Heart left ventricle (tissue), 16 donors: ENCODE measurements at regions of chr17 and their contacts with region 1.

Region 1: DNA sequence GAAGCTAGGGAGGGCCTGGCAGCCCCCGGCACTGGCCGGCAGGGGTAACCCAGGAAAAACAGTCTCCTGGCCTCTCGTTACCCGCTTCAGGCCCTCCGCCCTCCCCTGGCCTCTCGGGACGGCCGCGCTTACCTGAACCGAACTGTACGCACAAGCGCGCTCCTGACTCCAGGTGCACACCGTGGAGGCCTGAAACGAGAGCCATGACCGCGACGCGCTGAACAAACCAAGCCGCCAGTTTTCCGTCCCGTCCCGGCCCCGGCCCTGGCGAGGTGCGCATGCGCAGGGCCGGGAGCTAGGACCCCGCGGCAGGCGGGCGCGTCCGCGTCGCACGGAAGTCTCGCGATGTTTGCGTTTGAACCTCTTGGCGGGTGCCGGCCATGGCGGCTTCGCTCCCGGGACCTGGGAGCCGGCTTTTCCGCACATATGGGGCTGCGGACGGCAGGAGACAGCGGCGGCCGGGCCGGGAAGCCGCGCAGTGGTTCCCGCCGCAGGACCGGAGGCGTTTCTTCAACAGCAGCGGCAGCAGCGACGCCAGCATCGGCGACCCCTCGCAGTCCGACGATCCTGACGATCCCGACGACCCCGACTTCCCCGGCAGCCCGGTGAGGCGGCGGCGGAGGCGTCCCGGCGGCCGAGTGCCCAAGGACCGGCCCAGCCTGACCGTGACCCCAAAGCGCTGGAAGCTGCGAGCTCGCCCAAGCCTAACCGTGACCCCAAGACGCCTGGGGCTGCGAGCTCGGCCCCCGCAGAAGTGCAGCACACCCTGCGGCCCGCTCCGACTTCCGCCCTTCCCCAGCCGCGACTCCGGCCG is at the start of gene HASPIN:
- DNase-seq: peak; percentile 91 to 98 (median 93)
- ATAC-seq: peak; percentile 83 to 96 (median 96)
- H3K4me3 ChIP-seq: peak within 1 kb of the TSS; percentile 65 to 94 (median 78)
- H3K27ac ChIP-seq: peak within 1 kb of the TSS; percentile 52 to 91 (median 88)
- H3K4me1 ChIP-seq: peaks cover 6 to 47% (median 19%) of the 10 kb centered on the region in 12 donors
- H3K27me3 ChIP-seq: no peaks in the 10 kb centered on the region
- CTCF ChIP-seq: peak in 4 of 12 donors; percentile 25 to 41 (median 28)
- POLR2A ChIP-seq: peak in 1 of 2 donors; percentile 67
- total RNA-seq, gene HASPIN: 0.15 to 2.1 (median 0.32) TPM

Region 2: GRCh38 chr17:3602499-3602898 is 121.3 kb before region 1 on chr17:
- intact Hi-C with region 1: no loop called
- DNase-seq: no peak
- ATAC-seq: peak in 2 of 4 donors; percentile 27 to 33
- H3K4me3 ChIP-seq: no peak overlapping the region
- H3K27ac ChIP-seq: no peak overlapping the region
- H3K4me1 ChIP-seq: no peaks in the 10 kb centered on the region
- H3K27me3 ChIP-seq: no peaks in the 10 kb centered on the region
- CTCF ChIP-seq: peak; percentile 32 to 58 (median 46)
- POLR2A ChIP-seq: no peak

Region 3: DNA sequence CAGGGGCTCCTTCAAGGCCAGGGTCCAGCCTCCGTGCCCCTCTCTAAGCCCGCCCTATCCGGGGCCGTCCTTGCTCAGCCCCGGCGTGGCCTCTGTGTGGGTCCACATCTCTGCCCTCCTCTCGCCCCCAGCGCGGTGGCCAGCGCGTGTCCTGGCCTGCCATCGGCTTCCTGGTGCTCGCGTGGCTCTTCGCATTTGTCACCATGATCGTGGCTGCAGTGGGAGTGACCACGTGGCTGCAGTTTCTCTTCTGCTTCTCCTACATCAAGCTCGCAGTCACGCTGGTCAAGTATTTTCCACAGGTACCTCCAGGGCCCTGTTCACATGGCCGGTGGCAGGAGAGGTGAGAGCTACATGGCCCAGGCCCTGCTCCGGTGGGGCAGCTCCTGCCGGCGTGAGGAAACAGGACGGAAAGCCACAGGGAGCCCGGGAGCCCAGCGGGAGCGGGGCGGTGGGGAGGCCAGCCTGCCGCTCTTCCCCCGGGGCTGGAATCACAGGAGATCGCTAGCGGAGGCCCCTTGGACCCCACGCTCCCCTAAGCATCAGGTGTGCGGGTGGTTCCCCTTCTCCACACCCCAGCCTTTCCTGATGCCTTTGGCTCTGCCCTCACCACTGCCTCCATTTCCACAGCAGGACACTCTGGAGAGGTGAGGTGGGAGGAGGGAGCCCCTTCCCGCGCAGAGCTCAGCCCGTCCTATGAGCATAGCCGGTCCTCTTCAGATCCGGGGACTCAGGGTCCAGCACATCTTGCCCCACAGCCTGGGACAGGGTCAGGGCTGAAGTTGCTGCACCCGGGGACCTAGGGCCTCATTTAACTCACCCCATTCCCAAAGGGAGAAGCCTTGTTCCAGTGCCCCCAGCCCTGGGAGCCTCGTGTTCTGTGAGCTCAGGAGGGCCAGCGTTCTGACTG is 65.6 kb before region 1 on chr17:
- intact Hi-C with region 1: no loop called
- DNase-seq: no peak
- ATAC-seq: no peak
- H3K4me3 ChIP-seq: no peak overlapping the region
- H3K27ac ChIP-seq: peak overlapping the region in 9 of 12 donors; percentile 69 to 92 (median 85)
- H3K4me1 ChIP-seq: peaks cover 5 to 42% (median 20%) of the 10 kb centered on the region in 12 donors
- H3K27me3 ChIP-seq: no peaks in the 10 kb centered on the region
- CTCF ChIP-seq: no peak
- POLR2A ChIP-seq: no peak

Region 4: GRCh38 chr17:3668279-3669085 is 55.3 kb before region 1 on chr17 and contains the starts of genes EMC6 and TAX1BP3:
- intact Hi-C with region 1: loop called in 1 of 10 experiments (anchors 2 kb)
- DNase-seq: peak; percentile 98 to 100 (median 99)
- ATAC-seq: peak; percentile 86 to 93 (median 90)
- H3K4me3 ChIP-seq: peak within 1 kb of the TSS; percentile 61 to 100 (median 88)
- H3K27ac ChIP-seq: peak within 1 kb of the TSS; percentile 91 to 100 (median 99)
- H3K4me1 ChIP-seq: peaks cover 4 to 47% (median 36%) of the 10 kb centered on the region in 12 donors
- H3K27me3 ChIP-seq: no peaks in the 10 kb centered on the region
- CTCF ChIP-seq: peak in 2 of 12 donors; percentile 2 to 3
- POLR2A ChIP-seq: peak; percentile 98 to 100
- total RNA-seq, gene EMC6: 24.2 to 78.2 (median 51.9) TPM
- total RNA-seq, gene TAX1BP3: 122 to 291 (median 177) TPM

Region 5: GRCh38 chr17:3762922-3763776 is 39.4 kb after region 1 on chr17:
- intact Hi-C with region 1: no loop called
- DNase-seq: no peak
- ATAC-seq: no peak
- H3K4me3 ChIP-seq: peak overlapping the region in 1 of 12 donors; percentile 33
- H3K27ac ChIP-seq: peak overlapping the region in 1 of 12 donors; percentile 20
- H3K4me1 ChIP-seq: peaks cover 0 to 6% (median 0%) of the 10 kb centered on the region in 12 donors
- H3K27me3 ChIP-seq: no peaks in the 10 kb centered on the region
- CTCF ChIP-seq: no peak
- POLR2A ChIP-seq: no peak

Region 6: GRCh38 chr17:3794557-3795389 is 71.0 kb after region 1 on chr17:
- intact Hi-C with region 1: no loop called
- DNase-seq: no peak
- ATAC-seq: no peak
- H3K4me3 ChIP-seq: no peak overlapping the region
- H3K27ac ChIP-seq: no peak overlapping the region
- H3K4me1 ChIP-seq: peaks cover 0 to 16% (median 0%) of the 10 kb centered on the region in 12 donors
- H3K27me3 ChIP-seq: no peaks in the 10 kb centered on the region
- CTCF ChIP-seq: no peak
- POLR2A ChIP-seq: no peak